Activated CD4-positive, alpha-beta T cell treated with anti-CD3 and anti-CD28 coated beads, Interleukin-2, amount 10 ng/mL, durations not matched to agents 24 days and 14 days (primary cell): ENCODE measurements at regions of chr11 and their contacts with region 1.

Region 1: GRCh38 chr11:86230921-86231430 is 13.6 kb upstream of the EED start:
- DNase-seq: peak; percentile 53
- H3K4me3 Mint-ChIP-seq: no peak overlapping the region
- H3K27ac Mint-ChIP-seq: peak overlapping the region; percentile 73
- H3K4me1 Mint-ChIP-seq: peaks cover 46% of the 10 kb centered on the region
- H3K27me3 Mint-ChIP-seq: peaks cover 2% of the 10 kb centered on the region

Region 2: DNA sequence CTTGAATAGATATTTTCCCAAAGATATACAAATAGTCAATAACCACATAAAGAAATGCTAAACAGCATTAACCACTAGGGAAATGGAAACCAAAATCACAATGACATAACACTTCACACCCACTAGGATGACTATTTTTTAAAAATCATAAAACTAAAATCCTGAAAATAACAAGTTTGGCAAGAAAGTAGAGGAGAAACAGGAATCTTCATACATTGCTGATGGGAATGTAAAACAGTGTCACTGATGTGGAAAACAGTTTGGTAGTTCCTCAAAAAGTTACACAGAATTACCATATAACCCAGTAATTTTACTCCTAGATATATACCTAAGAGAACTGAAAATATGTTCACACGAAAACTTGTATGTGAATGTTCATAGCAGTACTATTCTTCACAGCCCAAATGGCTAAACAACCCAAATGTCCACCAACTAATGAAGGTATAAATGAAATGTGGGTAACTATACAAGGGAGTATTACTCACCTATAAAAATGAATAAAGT is 174.6 kb before region 1 on chr11:
- intact Hi-C with region 1: no loop called
- DNase-seq: no peak
- H3K4me3 Mint-ChIP-seq: no peak overlapping the region
- H3K27ac Mint-ChIP-seq: no peak overlapping the region
- H3K4me1 Mint-ChIP-seq: peaks cover 63% of the 10 kb centered on the region
- H3K27me3 Mint-ChIP-seq: no peaks in the 10 kb centered on the region

Region 3: DNA sequence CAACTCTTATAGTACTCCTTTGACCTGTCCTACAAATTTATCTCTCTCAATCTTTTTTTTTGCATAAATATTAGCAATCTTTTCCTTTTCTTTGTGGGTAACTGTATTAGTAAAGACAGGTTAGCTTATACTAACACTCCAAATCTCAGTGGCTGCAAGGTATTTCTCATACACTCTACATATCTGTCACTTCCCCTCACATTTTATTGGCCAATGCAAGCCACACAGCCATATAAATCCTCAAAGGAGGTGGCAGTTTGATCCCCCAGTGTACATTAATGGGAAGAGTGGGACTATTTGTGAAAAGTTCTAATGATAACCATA is 29.0 kb before region 1 on chr11:
- intact Hi-C with region 1: loop called (anchors 1 kb)
- DNase-seq: peak; percentile 70
- H3K4me3 Mint-ChIP-seq: no peak overlapping the region
- H3K27ac Mint-ChIP-seq: no peak overlapping the region
- H3K4me1 Mint-ChIP-seq: peaks cover 14% of the 10 kb centered on the region
- H3K27me3 Mint-ChIP-seq: no peaks in the 10 kb centered on the region

Region 4: DNA sequence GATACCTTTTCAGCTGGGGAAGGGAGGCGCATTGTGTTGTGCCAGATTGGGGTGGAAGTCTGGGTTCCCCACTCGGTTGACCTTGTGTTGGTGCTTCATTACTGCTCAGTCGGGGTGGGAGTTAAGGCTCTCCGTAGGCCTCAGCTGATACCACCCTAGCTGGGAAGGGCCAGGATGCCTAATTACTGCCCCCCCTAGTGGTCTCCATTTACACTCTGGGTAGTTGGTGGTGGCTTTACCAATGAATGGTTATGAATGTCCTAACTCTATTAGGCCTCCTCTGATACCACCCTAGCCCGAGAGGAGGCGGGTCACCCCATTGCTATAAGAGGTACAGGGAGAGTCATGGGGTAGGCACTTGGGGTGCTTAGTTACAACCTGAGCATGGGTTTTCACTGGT is 43.5 kb after region 1 on chr11:
- intact Hi-C with region 1: no loop called
- DNase-seq: peak; percentile 54
- H3K4me3 Mint-ChIP-seq: no peak overlapping the region
- H3K27ac Mint-ChIP-seq: peak overlapping the region; percentile 27
- H3K4me1 Mint-ChIP-seq: peaks cover 39% of the 10 kb centered on the region
- H3K27me3 Mint-ChIP-seq: no peaks in the 10 kb centered on the region